GM10248 (cell line): ENCODE measurements at regions of chr14 and their contacts with region 1.

Region 1: DNA sequence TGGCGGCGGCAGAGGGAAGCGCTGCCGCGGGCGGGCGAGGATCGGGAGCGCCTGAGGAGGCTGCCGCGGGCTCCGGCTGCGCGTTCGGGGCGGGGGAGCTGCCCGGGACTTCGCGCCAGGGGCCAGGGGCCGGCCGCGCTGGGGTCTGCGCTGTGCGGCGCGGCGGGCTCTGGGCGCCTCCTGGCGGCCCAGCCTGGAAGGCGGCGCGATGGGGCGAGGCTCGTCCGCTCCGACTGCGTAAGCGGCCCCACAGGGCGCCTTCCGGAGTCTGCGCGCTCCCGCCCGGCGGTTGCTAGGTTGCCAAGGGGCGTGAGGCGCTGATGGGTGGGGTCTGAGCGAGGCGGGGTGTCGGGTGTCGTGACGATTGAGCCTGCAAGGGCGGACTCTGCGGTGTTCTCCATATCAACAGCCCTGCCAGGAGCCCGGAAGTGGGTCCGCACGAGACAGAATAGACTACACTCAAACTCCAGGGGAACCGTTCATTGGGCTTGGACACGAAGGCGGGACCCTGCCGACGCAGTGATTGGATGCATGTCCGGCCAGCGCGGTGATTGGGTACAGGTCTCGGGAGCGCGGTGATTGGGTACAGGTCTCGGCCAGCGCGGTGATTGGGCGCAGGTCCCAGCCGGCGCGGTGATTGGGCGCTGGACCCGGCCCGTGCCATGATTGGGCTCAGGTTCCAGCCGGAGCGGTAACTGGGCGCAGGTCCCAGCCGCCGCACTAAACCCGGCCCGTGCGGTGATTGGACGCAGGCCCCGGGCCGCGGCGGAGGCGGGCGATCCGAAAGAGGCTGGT is at the start of gene TEDC1:
- DNase-seq: peak; percentile 95
- CTCF ChIP-seq: peak; percentile 93

Region 2: DNA sequence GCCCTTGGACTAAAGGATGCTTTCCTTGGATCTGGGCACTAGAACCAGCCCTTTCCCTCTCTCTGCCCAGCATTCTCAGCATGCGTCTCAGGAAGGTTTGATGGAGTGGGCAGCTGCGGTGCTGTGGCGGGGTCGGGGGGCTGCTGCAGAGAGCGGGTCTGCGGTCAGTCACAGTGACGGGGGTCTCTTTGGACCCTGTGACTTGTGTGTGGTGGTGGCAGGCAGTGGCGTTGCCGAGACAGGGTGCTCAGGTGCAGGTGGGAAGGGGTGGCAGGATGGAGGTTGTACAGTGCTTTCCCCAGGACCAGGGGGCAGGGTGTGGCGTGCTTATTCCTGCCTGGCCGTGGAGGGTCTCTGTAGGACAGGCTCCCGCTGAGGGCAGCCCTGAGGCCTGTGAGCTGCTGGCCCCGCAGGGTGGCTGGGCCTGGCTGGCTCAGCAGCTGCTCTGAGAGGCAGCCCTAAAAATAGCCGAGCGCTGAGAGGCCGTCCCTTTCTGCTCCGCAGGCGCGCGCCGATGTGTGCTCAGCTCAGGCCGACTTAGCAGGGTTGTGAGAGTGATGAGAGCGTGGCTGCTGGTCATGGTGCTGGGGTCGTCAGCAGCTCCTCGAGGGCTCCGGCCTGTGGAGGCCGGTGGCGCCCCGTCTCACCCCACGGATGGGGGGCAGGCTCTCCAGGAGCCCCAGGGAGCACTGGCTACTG is 166.5 kb before region 1 on chr14:
- CTCF ChIA-PET with region 1: no interaction called
- POLR2A ChIA-PET with region 1: no interaction called
- DNase-seq: no peak
- CTCF ChIP-seq: no peak

Region 3: GRCh38 chr14:105369653-105370040 is 121.1 kb before region 1 on chr14:
- CTCF ChIA-PET with region 1: interaction called, 96 read pairs
- POLR2A ChIA-PET with region 1: no interaction called
- DNase-seq: no peak
- CTCF ChIP-seq: no peak

Region 4: GRCh38 chr14:105375635-105376057 is 115.1 kb before region 1 on chr14:
- CTCF ChIA-PET with region 1: interaction called, 96 read pairs
- POLR2A ChIA-PET with region 1: no interaction called
- DNase-seq: no peak
- CTCF ChIP-seq: no peak

Region 5: DNA sequence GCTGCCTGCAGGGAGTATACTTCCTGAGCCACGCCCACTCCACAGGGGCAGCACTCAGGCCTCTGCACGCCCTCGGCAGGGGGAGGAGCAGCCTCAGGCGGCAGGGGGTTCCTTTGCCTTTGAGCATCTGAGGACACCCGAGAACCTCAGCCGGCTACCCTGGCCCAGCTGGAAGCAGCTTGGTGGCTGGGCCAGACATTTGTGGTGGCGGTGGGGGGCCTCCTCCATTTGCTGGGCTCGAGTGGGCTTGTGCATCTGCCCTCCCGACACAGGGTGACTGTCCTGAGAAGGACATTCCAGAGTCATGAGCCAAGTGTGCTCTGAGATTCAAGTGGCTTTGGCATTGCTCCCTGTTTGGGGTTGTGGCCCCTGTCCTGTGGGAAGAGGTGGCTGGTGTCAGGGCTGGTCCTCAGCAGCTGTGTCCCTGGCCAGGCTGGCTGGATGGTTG is 25.2 kb before region 1 on chr14:
- CTCF ChIA-PET with region 1: interaction called, 13 read pairs
- POLR2A ChIA-PET with region 1: no interaction called
- DNase-seq: no peak
- CTCF ChIP-seq: no peak

Region 6: DNA sequence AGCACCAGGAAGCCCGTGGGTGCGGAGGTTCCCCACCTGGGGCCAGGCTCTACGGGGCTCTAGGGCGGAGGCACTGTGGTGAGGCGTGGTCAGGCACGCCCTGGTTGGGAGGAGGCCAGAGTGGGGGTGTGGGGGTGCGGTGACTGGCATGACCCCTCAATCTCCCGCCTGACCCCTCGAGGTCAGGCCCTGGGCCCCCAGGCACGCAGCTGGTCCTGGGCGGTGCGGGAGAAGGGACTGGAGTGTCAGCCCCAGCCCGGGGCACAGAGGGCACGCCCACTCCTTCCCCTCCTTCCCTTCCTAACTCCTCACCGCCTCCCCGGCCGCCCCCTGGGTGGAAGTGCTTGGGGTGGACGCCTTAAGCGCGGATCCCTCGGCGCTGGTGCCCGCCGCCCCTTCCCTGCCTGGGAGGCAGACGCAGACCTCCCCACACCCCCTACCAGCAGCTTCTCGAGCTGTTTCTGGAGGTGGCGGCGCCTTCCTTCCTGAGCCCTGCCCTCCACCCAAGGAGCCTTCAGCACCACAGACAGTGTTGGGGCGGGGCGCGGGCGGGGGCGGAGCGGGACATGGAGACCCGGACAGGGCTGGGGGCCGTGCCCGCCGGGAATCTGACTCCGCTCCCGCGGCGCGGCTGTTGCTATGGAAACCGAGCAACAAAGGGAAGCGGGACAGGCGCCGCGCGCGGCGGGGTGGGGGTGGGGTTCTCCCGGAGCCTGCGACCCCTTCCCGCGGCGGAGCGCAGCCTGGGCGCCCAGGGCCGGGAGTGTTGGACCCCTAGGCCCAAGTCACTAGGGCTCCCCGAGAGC is 16.9 kb before region 1 on chr14:
- CTCF ChIA-PET with region 1: interaction called, 13 read pairs
- POLR2A ChIA-PET with region 1: interaction called, 4 read pairs
- DNase-seq: peak; percentile 66
- CTCF ChIP-seq: no peak

Region 7: DNA sequence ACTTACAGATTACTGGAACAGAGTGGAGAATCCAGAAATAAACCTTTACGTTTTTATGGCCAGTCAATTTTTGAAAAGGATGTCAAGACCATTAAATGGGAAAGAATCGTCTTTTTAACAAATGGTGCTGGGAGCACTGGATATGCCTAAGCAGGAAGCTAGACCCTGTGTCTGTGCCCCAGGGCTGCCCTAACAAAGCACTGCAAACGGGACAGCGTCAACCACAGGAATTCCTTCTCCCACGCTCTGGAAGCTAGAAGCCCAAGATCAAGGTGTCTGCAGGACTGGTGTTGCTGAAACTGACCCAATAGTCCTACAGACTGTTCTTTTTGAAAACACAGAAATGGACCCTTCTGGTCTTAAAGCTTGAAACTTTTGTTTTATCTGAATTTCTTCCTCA is 26.3 kb after region 1 on chr14:
- CTCF ChIA-PET with region 1: no interaction called
- POLR2A ChIA-PET with region 1: no interaction called
- DNase-seq: no peak
- CTCF ChIP-seq: no peak

Region 8: GRCh38 chr14:105527661-105528581 is 37.2 kb after region 1 on chr14:
- CTCF ChIA-PET with region 1: interaction called, 11 read pairs
- POLR2A ChIA-PET with region 1: no interaction called
- DNase-seq: peak; percentile 93
- CTCF ChIP-seq: peak; percentile 95

Region 9: GRCh38 chr14:105709281-105710118 is 218.7 kb after region 1 on chr14:
- CTCF ChIA-PET with region 1: no interaction called
- POLR2A ChIA-PET with region 1: no interaction called
- DNase-seq: no peak
- CTCF ChIP-seq: no peak